ENCODE measurements at regions of chr10 and their contacts with region 1.

Region 1: GRCh38 chr10:91251430-91252056 is 31.1 kb downstream of the PCGF5 start:
- DNase-seq: peak; percentile 61 to 81
- H3K4me3 ChIP-seq: no peak overlapping the region
- H3K27ac ChIP-seq: no peak overlapping the region
- H3K4me1 ChIP-seq: peaks cover 0 to 26% (median 8%) of the 10 kb centered on the region in 4 donors
- H3K27me3 ChIP-seq: no peaks in the 10 kb centered on the region
- CTCF ChIP-seq: peak in 5 of 7 experiments; percentile 81 to 90 (median 87)
- EP300 ChIP-seq: no peak
- POLR2A ChIP-seq: no peak

Region 2: DNA sequence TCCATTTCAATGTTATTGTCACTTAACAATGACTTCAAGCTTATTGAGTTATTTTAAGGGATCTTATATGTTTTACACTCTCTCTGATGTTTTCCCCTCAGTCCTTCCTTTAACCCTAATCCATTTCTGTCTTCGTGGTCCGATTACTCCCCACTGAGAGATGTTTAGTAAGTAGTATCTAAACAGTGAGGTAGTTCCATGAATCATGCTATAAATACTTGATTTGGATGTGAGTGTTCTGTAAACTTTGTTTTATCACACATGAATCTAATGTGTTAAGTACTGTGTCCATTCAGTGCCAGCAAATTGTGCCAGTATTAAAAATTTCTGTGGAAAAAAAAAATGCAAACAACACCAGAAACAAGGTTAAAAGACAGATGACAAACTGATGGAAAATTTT is 361.2 kb before region 1 on chr10:
- intact Hi-C with region 1: loop called (anchors 10 kb)
- DNase-seq: no peak
- H3K4me3 ChIP-seq: no peak overlapping the region
- H3K27ac ChIP-seq: no peak overlapping the region
- H3K4me1 ChIP-seq: peaks cover 11 to 34% (median 23%) of the 10 kb centered on the region in 4 donors
- H3K27me3 ChIP-seq: no peaks in the 10 kb centered on the region
- CTCF ChIP-seq: no peak
- EP300 ChIP-seq: no peak
- POLR2A ChIP-seq: no peak

Region 3: DNA sequence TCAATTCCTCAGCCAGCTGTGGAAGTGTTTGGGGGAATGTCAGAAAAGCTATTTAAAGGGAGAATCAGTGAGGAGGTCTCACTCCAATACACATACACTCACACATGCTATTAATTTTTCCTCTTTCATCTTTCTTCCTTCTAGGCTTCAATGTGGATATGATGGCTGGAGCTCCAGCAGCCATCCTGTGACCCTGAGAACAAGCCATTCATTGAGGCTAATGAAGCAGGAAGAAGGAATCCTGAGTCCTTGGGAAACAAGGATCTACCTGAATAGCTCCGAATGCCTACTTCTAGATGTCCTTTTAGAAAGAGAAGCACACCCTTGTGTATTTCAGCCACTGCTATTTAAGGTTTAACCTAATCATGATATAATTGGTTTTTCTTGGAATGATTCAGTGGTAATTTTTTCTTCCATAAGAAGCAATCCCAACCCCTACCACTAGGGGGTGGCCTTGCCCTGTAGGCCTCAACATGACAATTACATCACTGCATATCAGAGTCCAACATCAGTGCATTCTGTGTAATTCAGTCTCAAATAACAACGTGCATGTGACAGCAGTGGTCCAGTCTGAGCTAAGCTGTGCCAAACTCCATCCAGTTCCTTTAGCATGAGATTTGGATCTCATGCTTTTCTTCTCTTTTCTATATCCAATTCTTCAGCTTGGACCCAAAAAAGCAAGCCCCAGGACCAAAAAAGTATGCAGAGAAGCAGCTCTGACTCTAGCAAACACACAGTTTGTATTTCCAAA is 245.4 kb before region 1 on chr10:
- intact Hi-C with region 1: loop called (anchors 10 kb)
- DNase-seq: peak; percentile 58 to 83
- H3K4me3 ChIP-seq: no peak overlapping the region
- H3K27ac ChIP-seq: peak overlapping the region in 2 of 5 donors; percentile 0 to 20
- H3K4me1 ChIP-seq: no peaks in the 10 kb centered on the region
- H3K27me3 ChIP-seq: no peaks in the 10 kb centered on the region
- CTCF ChIP-seq: peak in 5 of 7 experiments; percentile 82 to 96 (median 85)
- EP300 ChIP-seq: no peak
- POLR2A ChIP-seq: no peak

Region 4: DNA sequence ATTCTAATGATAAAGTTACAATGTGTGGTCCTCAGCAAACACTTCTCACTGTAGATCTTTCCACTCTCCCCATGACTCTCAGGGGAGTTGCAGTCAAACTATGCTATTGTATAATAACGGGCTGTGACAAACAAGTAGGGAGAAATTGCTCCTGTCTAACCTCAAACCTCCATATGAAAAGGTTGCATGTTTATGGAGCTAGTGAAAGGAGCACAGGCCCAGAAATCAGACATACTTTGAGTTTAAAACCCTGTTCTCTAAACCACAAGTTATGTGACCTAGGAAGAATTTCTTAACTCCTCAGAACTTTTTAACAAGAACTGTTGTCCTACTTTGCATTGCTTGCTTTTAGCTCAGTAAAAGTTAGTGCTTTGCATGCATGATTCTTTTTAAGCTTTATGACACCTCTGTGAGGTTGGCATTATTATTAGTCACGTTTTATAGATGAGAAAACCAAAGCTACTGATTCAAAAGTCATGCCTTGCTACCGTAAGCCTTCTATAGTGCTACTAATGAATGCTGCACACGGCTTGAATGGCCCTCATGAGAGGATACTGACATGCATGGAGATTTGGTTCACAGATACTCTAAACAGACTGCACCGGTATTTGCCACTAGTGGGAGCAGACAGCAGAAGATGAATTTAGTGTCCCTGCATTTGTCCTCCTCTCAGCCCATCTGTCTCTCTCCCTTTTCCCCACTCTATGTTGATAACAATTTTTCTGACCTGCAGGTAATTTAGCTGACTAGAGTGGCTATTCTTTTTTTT is 160.6 kb before region 1 on chr10:
- intact Hi-C with region 1: loop called (anchors 10 kb)
- DNase-seq: peak in 1 of 2 donors; percentile 15
- H3K4me3 ChIP-seq: no peak overlapping the region
- H3K27ac ChIP-seq: no peak overlapping the region
- H3K4me1 ChIP-seq: peaks cover 0 to 11% (median 0%) of the 10 kb centered on the region in 4 donors
- H3K27me3 ChIP-seq: no peaks in the 10 kb centered on the region
- CTCF ChIP-seq: no peak
- EP300 ChIP-seq: no peak
- POLR2A ChIP-seq: no peak

Region 5: DNA sequence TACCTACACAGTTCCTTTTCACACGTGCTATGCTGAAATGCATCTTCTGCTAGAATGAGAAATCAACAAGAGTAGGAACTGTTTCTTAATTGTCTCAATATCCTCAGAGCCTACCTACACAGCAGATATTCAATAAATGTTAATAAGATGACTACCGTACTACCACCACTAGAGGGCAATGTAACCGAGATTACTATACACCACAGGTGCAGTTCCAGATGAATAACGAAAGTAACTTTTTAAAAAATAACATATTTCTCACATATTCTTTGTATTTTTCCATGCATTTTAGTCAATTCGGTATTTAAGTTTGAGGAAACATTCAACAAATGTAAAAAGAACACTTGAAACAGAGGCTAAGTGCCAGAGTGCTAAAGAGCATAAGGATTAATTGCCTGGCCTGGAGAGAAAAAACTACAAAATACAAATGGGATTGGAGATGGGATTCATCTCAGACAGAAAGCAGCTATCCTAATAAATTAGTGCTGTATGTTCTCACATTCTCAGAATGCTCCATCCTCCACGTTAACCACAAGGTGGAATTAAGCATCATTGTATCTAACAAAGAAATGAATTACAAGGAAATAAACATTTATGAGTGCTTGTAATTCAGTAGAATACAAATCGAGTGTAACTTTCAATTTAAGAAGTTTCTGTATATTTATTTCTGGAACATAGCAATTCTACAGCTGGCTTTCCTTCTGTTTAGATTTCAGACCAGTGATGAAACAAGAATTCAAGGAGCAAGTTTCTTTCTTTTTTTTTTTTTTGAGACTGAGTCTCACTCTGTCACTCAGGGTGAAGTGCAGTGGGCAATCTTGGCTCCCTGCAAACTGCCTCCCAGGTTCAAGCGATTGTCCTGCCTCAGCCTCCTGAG is 138.3 kb after region 1 on chr10:
- intact Hi-C with region 1: no loop called
- DNase-seq: peak in 1 of 2 donors; percentile 86
- H3K4me3 ChIP-seq: peak overlapping the region in 1 of 4 donors; percentile 13
- H3K27ac ChIP-seq: no peak overlapping the region
- H3K4me1 ChIP-seq: peaks cover 0 to 8% (median 0%) of the 10 kb centered on the region in 4 donors
- H3K27me3 ChIP-seq: no peaks in the 10 kb centered on the region
- CTCF ChIP-seq: peak in 5 of 7 experiments; percentile 49 to 79 (median 62)
- EP300 ChIP-seq: no peak
- POLR2A ChIP-seq: no peak

Measured in stomach (tissue), 19 donors.